Activated B cell treated with CpG ODN at 0.5 μM for 24 hours (primary cell): ENCODE measurements at regions of chr15 and their contacts with region 1.

Region 1: GRCh38 chr15:31021067-31021670 is 29.7 kb upstream of the MTMR10 start:
- DNase-seq: no peak
- ATAC-seq: peak; percentile 81
- H3K4me3 Mint-ChIP-seq: no peak overlapping the region
- H3K27ac Mint-ChIP-seq: peak overlapping the region; percentile 38
- H3K4me1 Mint-ChIP-seq: peaks cover 63% of the 10 kb centered on the region
- H3K27me3 Mint-ChIP-seq: no peaks in the 10 kb centered on the region
- CTCF ChIP-seq: no peak

Region 2: GRCh38 chr15:31004220-31004733 is 16.9 kb before region 1 on chr15:
- CTCF ChIA-PET with region 1: no interaction called
- POLR2A ChIA-PET with region 1: interaction called, 3 read pairs
- intact Hi-C with region 1: loop called (anchors 2 kb)
- DNase-seq: peak; percentile 36
- ATAC-seq: peak; percentile 90
- H3K4me3 Mint-ChIP-seq: peak overlapping the region; percentile 81
- H3K27ac Mint-ChIP-seq: peak overlapping the region; percentile 68
- H3K4me1 Mint-ChIP-seq: peaks cover 89% of the 10 kb centered on the region
- H3K27me3 Mint-ChIP-seq: no peaks in the 10 kb centered on the region
- CTCF ChIP-seq: no peak